ENCODE measurements at regions of chr6 and their contacts with region 1.

Region 1: GRCh38 chr6:45922728-45923351 is 92.8 kb downstream of the CLIC5 start:
- DNase-seq: no peak
- H3K4me3 ChIP-seq: no peak overlapping the region
- H3K27me3 ChIP-seq: no peaks in the 10 kb centered on the region
- CTCF ChIP-seq: peak; percentile 85

Region 2: DNA sequence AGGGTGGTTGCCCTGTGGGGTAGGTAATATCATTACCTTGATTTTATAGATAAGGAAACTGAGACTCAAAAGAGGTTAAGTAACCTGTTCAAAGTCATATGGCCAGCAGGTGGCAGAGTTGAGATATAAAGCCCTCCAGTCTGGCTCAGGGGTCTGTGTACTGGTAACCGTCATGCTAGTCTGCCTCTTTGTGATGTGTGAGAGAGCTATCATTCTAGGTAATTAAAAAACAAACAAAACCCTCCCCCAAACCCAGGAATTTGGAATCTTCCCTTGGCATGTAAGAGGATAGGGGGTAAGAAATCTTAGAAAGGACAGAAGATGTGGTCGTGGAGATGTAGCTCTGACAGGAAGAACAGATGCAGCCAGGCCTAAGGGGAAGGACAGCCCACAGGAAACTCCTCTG is 1329.3 kb before region 1 on chr6:
- CTCF ChIA-PET with region 1: interaction called, 12 read pairs
- POLR2A ChIA-PET with region 1: no interaction called
- DNase-seq: no peak
- H3K4me3 ChIP-seq: no peak overlapping the region
- H3K27me3 ChIP-seq: peaks cover 3% of the 10 kb centered on the region; the same call in 1 of the 2 replicates
- CTCF ChIP-seq: peak; percentile 63

Region 3: DNA sequence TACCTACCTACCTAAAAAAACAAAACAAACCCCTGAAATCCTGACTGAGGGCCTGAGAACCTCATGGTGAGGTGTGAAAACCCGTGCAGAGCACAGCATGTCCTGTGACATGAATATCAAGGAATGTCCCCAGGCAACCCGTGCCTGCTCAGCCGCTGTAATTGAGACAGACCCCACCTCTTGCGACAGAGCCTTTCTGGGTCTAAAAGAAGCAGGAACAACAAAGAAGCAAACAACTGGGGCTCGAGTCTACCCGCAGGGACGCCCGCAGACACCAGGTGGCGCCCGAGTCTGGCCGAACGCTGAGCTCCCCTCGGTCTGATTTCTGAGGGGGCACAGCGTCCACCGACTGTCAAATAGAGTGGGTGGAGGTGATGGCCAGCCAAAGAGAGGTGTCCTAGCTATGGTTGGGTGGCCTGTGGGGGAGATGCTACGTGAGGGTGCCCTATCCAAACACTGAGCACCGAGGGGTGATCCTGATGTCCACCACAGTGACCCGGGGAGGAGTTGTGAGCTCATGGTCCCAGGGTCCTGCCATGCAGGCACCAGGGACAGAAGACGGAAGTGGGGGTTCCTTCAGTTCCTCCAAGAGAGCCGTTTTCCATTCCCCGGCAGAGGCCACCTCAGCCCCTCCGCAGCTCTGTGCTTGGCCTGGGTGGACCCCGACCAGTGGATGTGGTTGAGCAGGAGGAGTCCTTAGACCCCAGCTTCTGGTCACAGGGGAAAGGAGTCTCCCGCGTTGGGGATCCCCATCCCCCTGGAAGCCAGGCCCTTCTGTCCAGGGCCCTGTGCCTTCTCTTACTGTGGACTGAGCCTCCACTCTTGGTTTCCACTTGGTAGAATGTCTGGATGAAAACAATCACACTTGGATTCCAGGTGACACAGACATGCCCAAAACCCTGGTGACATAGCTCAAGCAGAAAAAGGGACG is 1267.2 kb before region 1 on chr6:
- CTCF ChIA-PET with region 1: interaction called, 26 read pairs
- POLR2A ChIA-PET with region 1: no interaction called
- DNase-seq: no peak
- H3K4me3 ChIP-seq: no peak overlapping the region
- H3K27me3 ChIP-seq: no peaks in the 10 kb centered on the region
- CTCF ChIP-seq: peak; percentile 96

Region 4: GRCh38 chr6:45757443-45758130 is 165.3 kb before region 1 on chr6:
- CTCF ChIA-PET with region 1: no interaction called
- POLR2A ChIA-PET with region 1: no interaction called
- DNase-seq: no peak
- H3K4me3 ChIP-seq: no peak overlapping the region
- H3K27me3 ChIP-seq: no peaks in the 10 kb centered on the region
- CTCF ChIP-seq: no peak

Measured in BJ (cell line).